Activated CD4-positive, alpha-beta T cell treated with anti-CD3 and anti-CD28 coated beads for 36 hours (primary cell): ENCODE measurements at regions of chr7 and their contacts with region 1.

Region 1: DNA sequence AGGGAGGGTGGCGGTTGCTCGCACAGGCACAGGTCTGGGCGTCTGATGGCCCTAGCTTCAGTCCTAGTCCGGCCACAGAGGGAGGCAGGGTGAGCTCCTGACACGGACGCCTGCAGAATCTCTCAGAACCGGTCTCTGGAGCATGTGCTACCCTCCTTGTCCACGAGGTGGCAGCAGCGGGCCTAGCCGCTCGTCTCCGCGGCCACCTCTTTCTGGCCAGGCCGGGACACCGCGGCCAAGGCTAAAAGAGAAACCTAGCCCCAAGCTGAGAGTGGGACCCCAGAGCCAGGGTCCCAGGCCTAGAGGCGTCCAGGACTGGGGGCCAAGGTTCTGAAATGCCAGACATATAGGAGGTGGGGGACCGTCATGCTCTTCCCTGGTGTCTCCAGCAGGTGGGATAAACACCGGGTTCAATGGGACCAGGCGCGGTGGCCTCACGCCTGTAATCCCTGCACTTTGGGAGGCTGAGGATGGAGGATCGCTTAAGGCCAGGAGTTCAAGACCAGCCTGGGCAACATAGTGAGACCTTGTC is 3.2 kb upstream of the LAT2 start:
- DNase-seq: peak; percentile 88
- ATAC-seq: peak; percentile 72
- H3K4me3 Mint-ChIP-seq: no peak overlapping the region
- H3K27ac Mint-ChIP-seq: no peak overlapping the region
- H3K4me1 Mint-ChIP-seq: peaks cover 10% of the 10 kb centered on the region
- H3K27me3 Mint-ChIP-seq: peaks cover 9% of the 10 kb centered on the region

Region 2: GRCh38 chr7:74068393-74069085 is 138.1 kb before region 1 on chr7:
- CTCF ChIA-PET with region 1: interaction called, 16 read pairs
- POLR2A ChIA-PET with region 1: no interaction called
- intact Hi-C with region 1: loop called (anchors 1 to 5 kb)
- DNase-seq: no peak
- ATAC-seq: no peak
- H3K4me3 Mint-ChIP-seq: no peak overlapping the region
- H3K27ac Mint-ChIP-seq: no peak overlapping the region
- H3K4me1 Mint-ChIP-seq: no peaks in the 10 kb centered on the region
- H3K27me3 Mint-ChIP-seq: no peaks in the 10 kb centered on the region

Region 3: GRCh38 chr7:74183613-74184450 is 22.8 kb before region 1 on chr7:
- CTCF ChIA-PET with region 1: interaction called, 39 read pairs
- POLR2A ChIA-PET with region 1: interaction called, 10 read pairs
- intact Hi-C with region 1: no loop called
- DNase-seq: peak; percentile 41
- ATAC-seq: peak; percentile 89
- H3K4me3 Mint-ChIP-seq: no peak overlapping the region
- H3K27ac Mint-ChIP-seq: peak overlapping the region; percentile 67
- H3K4me1 Mint-ChIP-seq: peaks cover 78% of the 10 kb centered on the region
- H3K27me3 Mint-ChIP-seq: no peaks in the 10 kb centered on the region

Region 4: DNA sequence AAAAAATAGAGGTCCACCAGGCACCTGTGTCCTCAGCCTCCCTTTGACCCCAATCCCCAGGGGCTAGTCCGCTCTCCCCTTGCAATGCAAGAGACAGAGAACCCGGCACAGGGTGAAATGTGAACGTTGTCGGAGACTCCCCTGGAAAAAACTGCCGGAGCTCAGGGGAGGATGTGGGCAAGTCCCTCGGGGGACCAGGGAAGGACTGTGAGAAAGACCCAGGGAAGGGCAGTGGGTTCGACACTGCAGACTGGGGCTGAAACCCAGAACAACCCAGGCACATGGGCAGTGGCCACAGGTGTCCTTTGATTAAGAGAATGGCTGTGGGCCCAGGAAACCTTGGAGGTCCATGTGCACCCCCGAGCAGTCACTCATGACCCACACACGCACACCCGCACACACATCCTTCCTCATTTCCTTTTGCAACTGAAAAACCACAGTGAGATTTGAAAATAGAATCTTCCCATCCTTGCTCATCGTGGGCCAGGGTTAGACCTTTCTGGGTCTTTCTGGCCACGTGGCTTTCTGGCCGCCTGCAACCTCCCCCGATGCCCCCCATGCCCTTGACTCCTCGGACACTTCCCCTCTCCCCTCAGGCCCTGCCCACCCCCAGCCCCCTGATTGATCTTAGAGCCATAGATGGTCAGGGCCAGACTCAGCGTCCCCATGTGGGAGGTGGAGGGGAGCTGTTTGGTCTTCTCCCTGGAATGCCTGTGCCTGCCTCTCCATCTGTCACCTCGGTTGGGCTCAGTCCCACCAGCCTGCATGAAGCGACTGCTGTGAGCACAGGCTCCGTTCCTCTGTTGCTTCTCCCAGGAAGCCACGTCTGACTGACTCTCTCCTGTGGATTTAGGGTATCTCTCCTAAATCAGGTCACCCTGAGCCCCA is 11.0 kb after region 1 on chr7:
- CTCF ChIA-PET with region 1: interaction called, 11 read pairs
- POLR2A ChIA-PET with region 1: no interaction called
- intact Hi-C with region 1: no loop called
- DNase-seq: no peak
- ATAC-seq: peak; percentile 27
- H3K4me3 Mint-ChIP-seq: no peak overlapping the region
- H3K27ac Mint-ChIP-seq: peak overlapping the region; percentile 65
- H3K4me1 Mint-ChIP-seq: peaks cover 14% of the 10 kb centered on the region
- H3K27me3 Mint-ChIP-seq: no peaks in the 10 kb centered on the region